Activated CD4-positive, alpha-beta memory T cell treated with anti-CD3 and anti-CD28 coated beads, Interleukin-2, amount 10 ng/mL, durations not matched to agents 7 days and 5 days (primary cell): ENCODE measurements at regions of chr6 and their contacts with region 1.

Region 1: DNA sequence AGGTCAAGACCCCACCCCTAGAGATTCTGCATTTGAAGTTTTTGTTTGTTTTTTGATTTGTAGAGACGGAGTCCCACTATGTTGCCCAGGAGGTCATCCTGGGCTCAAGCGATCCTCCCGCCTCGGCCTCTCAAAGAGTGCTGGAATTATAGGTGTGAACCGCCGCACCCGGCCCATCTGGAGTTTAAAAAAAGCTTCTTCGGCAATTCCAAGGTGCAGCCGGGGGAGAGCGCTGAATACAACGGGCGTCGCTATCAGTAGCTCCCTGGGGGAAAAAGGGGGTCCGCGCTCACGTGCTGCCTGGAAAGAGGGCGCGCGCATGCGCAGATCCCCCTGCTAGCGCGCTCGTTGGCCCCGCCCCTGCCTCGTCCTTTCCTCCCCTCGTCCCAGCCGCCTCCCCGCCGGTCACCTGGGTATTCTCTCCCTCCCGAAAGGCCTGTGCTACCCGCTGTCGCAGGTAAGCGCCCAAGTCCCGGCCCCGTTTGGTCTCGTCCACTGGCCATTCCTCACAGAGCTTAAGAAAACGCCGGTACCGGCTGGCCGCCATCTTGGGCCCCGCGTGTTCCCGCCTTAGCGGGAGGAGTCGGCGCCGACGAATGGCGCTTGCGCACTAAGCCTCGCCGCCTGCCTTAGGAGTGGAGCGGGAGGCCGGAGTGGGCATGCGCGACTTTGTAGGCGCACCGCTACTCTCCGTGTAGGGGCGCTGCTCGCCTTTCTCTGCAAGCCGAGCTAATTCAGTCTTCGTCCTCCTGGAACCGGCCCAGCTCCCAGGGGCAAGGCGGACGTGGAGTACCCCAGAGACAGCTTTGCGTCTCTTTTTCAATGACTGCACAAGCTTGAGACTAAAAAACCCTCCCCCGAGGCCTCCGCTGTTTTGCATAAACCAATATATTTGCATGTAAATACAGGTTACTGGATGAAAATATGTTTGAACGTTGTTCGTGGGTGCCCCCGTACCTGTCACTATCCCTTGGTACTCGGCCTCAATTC is at the start of gene UQCC2:
- DNase-seq: peak; percentile 98
- H3K4me3 Mint-ChIP-seq: peak within 1 kb of the TSS; percentile 97
- H3K27ac Mint-ChIP-seq: peak within 1 kb of the TSS; percentile 90
- H3K4me1 Mint-ChIP-seq: peaks cover 42% of the 10 kb centered on the region
- H3K27me3 Mint-ChIP-seq: peaks cover 3% of the 10 kb centered on the region
- total RNA-seq, gene UQCC2: 70.7 to 75.3 TPM

Region 2: GRCh38 chr6:33570806-33571636 is 140.4 kb before region 1 on chr6:
- CTCF ChIA-PET with region 1: interaction called, 10 read pairs
- POLR2A ChIA-PET with region 1: interaction called, 4 read pairs
- DNase-seq: peak; percentile 96
- H3K4me3 Mint-ChIP-seq: peak overlapping the region; percentile 75
- H3K27ac Mint-ChIP-seq: peak overlapping the region; percentile 100
- H3K4me1 Mint-ChIP-seq: peaks cover 61% of the 10 kb centered on the region
- H3K27me3 Mint-ChIP-seq: no peaks in the 10 kb centered on the region

Region 3: GRCh38 chr6:33620856-33621710 is 90.4 kb before region 1 on chr6 and contains the start of gene ITPR3:
- CTCF ChIA-PET with region 1: interaction called, 4 read pairs
- POLR2A ChIA-PET with region 1: interaction called, 23 read pairs
- DNase-seq: peak; percentile 84
- H3K4me3 Mint-ChIP-seq: peak within 1 kb of the TSS; percentile 94
- H3K27ac Mint-ChIP-seq: peak within 1 kb of the TSS; percentile 93
- H3K4me1 Mint-ChIP-seq: peaks cover 58% of the 10 kb centered on the region
- H3K27me3 Mint-ChIP-seq: no peaks in the 10 kb centered on the region
- total RNA-seq, gene ITPR3: 54.2 to 55.1 TPM

Region 4: GRCh38 chr6:33700391-33701050 is 10.9 kb before region 1 on chr6:
- CTCF ChIA-PET with region 1: interaction called, 59 read pairs
- POLR2A ChIA-PET with region 1: interaction called, 18 read pairs
- DNase-seq: peak; percentile 84
- H3K4me3 Mint-ChIP-seq: no peak overlapping the region
- H3K27ac Mint-ChIP-seq: peak overlapping the region; percentile 58
- H3K4me1 Mint-ChIP-seq: peaks cover 55% of the 10 kb centered on the region
- H3K27me3 Mint-ChIP-seq: no peaks in the 10 kb centered on the region

Region 5: GRCh38 chr6:33744001-33744848 is 32.8 kb after region 1 on chr6:
- CTCF ChIA-PET with region 1: interaction called, 18 read pairs
- POLR2A ChIA-PET with region 1: interaction called, 6 read pairs
- DNase-seq: peak; percentile 76
- H3K4me3 Mint-ChIP-seq: no peak overlapping the region
- H3K27ac Mint-ChIP-seq: no peak overlapping the region
- H3K4me1 Mint-ChIP-seq: no peaks in the 10 kb centered on the region
- H3K27me3 Mint-ChIP-seq: peaks cover 21% of the 10 kb centered on the region

Region 6: GRCh38 chr6:33788694-33789549 is 77.5 kb after region 1 on chr6 and contains the start of gene LEMD2:
- CTCF ChIA-PET with region 1: interaction called, 4 read pairs
- POLR2A ChIA-PET with region 1: interaction called, 13 read pairs
- DNase-seq: peak; percentile 93
- H3K4me3 Mint-ChIP-seq: peak within 1 kb of the TSS; percentile 96
- H3K27ac Mint-ChIP-seq: peak within 1 kb of the TSS; percentile 98
- H3K4me1 Mint-ChIP-seq: peaks cover 49% of the 10 kb centered on the region
- H3K27me3 Mint-ChIP-seq: peaks cover 19% of the 10 kb centered on the region
- total RNA-seq, gene LEMD2: 70.6 to 76.1 TPM

Region 7: GRCh38 chr6:33802186-33803064 is 91.0 kb after region 1 on chr6:
- CTCF ChIA-PET with region 1: no interaction called
- POLR2A ChIA-PET with region 1: no interaction called
- DNase-seq: no peak
- H3K4me3 Mint-ChIP-seq: no peak overlapping the region
- H3K27ac Mint-ChIP-seq: no peak overlapping the region
- H3K4me1 Mint-ChIP-seq: peaks cover 10% of the 10 kb centered on the region
- H3K27me3 Mint-ChIP-seq: peaks cover 35% of the 10 kb centered on the region